BJ (cell line): ENCODE measurements at regions of chr6 and their contacts with region 1.

Region 1: DNA sequence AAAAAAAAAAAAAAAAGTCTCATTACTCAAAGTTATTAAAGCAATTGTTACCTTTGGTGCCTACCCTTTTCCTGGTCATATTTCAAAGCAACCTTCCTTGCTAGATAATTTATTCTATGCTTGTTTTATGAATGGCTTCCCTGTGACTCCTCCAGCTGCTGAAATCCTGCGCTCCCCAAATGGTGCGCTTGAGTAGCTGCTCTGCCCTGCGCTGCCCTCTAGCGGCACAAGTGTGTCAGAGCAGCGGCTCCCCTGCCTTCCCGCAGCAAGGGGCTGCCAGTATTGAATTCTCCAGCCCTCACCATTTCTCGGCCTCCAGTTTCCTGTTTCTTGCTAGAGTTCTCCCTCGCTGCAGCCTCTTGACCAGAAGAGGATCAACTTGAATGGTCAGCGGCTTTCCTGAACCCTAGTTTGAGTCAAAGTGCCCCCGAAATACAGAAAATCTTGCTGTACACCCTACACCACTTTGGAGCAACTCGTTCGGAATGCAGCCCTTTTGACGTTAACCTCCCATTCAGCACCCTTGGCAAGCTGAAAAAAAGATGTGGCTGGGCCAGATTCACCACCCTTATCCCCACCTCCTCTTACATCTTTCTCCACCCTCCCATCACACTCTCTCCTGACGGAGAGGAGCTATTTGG is 60.4 kb upstream of the KLHL31 start:
- DNase-seq: no peak
- H3K4me3 ChIP-seq: no peak overlapping the region
- H3K27me3 ChIP-seq: no peaks in the 10 kb centered on the region; the same call in 1 of the 2 replicates
- CTCF ChIP-seq: peak; percentile 99

Region 2: GRCh38 chr6:53707108-53707897 is 18.6 kb before region 1 on chr6:
- CTCF ChIA-PET with region 1: interaction called, 80 read pairs
- POLR2A ChIA-PET with region 1: no interaction called
- DNase-seq: no peak
- H3K4me3 ChIP-seq: no peak overlapping the region
- H3K27me3 ChIP-seq: peaks cover 7% of the 10 kb centered on the region
- CTCF ChIP-seq: no peak

Region 3: GRCh38 chr6:53744334-53744733 is 18.4 kb after region 1 on chr6:
- CTCF ChIA-PET with region 1: interaction called, 11 read pairs
- POLR2A ChIA-PET with region 1: no interaction called
- DNase-seq: no peak
- H3K4me3 ChIP-seq: no peak overlapping the region
- H3K27me3 ChIP-seq: no peaks in the 10 kb centered on the region
- CTCF ChIP-seq: no peak

Region 4: DNA sequence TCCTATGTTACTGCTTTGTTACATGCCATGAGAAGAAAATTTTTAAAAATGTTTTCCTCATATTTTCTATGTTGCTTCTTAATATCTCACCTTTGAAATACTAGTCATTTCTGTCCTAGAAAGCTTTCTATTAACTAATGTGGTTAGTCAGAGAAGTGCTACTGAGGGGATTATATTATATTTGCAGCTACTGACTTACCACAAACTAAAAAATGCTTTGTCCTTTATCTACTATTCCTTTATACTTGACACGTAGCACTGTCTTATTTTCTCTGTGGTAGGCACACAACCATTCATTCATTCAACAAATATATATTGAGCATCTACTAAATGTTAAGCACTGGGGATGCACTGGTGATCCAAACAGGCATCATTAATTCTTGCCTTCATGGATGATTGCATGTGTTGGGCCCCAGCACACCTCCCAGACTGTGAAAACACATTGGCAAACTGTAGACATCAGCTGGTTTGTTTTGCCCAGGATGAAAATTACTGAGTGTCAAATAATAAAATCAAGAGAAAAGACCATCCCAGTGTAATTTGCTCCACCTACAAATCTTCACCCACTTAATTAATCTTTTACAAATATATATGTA is 374.6 kb after region 1 on chr6:
- CTCF ChIA-PET with region 1: no interaction called
- POLR2A ChIA-PET with region 1: no interaction called
- DNase-seq: no peak
- H3K4me3 ChIP-seq: no peak overlapping the region
- H3K27me3 ChIP-seq: no peaks in the 10 kb centered on the region
- CTCF ChIP-seq: no peak